Mammary epithelial cell (primary cell): ENCODE measurements at regions of chr16 and their contacts with region 1.

Region 1: GRCh38 chr16:3909791-3910570 is 29.5 kb upstream of the CREBBP start:
- DNase-seq: no peak
- H3K4me3 ChIP-seq: no peak overlapping the region
- H3K27ac ChIP-seq: no peak overlapping the region
- H3K4me1 ChIP-seq: no peaks in the 10 kb centered on the region
- H3K27me3 ChIP-seq: no peaks in the 10 kb centered on the region
- CTCF ChIP-seq: no peak

Region 2: GRCh38 chr16:3938848-3939624 is 29.1 kb after region 1 on chr16:
- CTCF ChIA-PET with region 1: no interaction called
- dilution Hi-C with region 1: no loop called
- in situ Hi-C with region 1: no loop called
- intact Hi-C with region 1: no loop called
- DNase-seq: no peak
- H3K4me3 ChIP-seq: peak overlapping the region in 2 of 3 experiments; percentile 31 to 44
- H3K27ac ChIP-seq: no peak overlapping the region
- H3K4me1 ChIP-seq: peaks cover 5% of the 10 kb centered on the region
- H3K27me3 ChIP-seq: no peaks in the 10 kb centered on the region
- CTCF ChIP-seq: peak; percentile 67 to 94

Region 3: GRCh38 chr16:4140652-4141051 is 230.7 kb after region 1 on chr16:
- CTCF ChIA-PET with region 1: no interaction called
- dilution Hi-C with region 1: no loop called
- in situ Hi-C with region 1: no loop called
- intact Hi-C with region 1: no loop called
- DNase-seq: peak; percentile 83
- H3K4me3 ChIP-seq: no peak overlapping the region
- H3K27ac ChIP-seq: peak overlapping the region; percentile 93
- H3K4me1 ChIP-seq: peaks cover 24% of the 10 kb centered on the region
- H3K27me3 ChIP-seq: no peaks in the 10 kb centered on the region
- CTCF ChIP-seq: no peak

Region 4: GRCh38 chr16:4339909-4340308 is 429.9 kb after region 1 on chr16:
- CTCF ChIA-PET with region 1: no interaction called
- dilution Hi-C with region 1: loop called (anchors 10 kb)
- in situ Hi-C with region 1: no loop called
- intact Hi-C with region 1: no loop called
- DNase-seq: no peak
- H3K4me3 ChIP-seq: no peak overlapping the region
- H3K27ac ChIP-seq: no peak overlapping the region
- H3K4me1 ChIP-seq: no peaks in the 10 kb centered on the region
- H3K27me3 ChIP-seq: no peaks in the 10 kb centered on the region
- CTCF ChIP-seq: no peak